Activated CD8-positive, alpha-beta memory T cell treated with anti-CD3 and anti-CD28 coated beads, Interleukin-2, amount 10 ng/mL, durations not matched to agents 7 days and 5 days (primary cell): ENCODE measurements at regions of chr5 and their contacts with region 1.

Region 1: GRCh38 chr5:151051066-151051930 is 29.5 kb downstream of the TNIP1 start:
- DNase-seq: peak; percentile 85
- ATAC-seq: peak; percentile 89
- H3K4me3 Mint-ChIP-seq: no peak overlapping the region
- H3K27ac Mint-ChIP-seq: peak overlapping the region; percentile 9
- H3K4me1 Mint-ChIP-seq: peaks cover 14% of the 10 kb centered on the region
- H3K27me3 Mint-ChIP-seq: no peaks in the 10 kb centered on the region

Region 2: DNA sequence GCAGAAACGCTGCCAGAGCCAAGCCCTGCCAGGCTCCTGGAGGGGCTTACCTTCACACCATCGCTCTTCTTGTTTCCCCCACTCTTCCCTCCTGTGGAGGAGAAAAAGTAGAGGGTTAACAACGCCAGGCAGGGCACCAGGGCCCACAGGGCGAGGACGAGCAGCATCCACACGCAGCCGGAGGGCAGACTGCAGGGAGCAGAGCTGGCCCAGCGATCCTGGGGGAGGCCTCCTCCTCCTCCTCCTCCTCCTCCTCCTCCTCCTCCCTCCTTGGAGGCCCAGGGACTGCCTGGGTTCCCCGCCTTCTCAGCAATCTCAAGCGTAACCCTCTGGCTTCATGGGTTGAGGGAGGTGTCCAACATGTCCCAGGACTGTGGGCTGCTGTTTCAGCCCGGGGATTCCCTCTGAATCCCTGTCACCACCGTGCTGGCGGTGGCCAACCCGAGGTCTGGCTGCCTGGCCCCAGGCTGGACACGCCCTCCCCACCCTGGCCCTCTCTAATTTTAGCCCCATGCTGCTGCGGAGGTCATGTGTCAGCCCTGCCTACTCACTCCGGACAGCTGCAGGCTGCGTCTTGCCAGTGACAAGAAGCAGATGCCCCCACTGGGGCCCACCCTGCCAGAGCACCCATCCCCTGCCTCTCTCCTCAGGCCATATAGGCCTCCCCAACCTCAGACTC is 806.0 kb before region 1 on chr5:
- CTCF ChIA-PET with region 1: no interaction called
- DNase-seq: no peak
- ATAC-seq: no peak
- H3K4me3 Mint-ChIP-seq: no peak overlapping the region
- H3K27ac Mint-ChIP-seq: no peak overlapping the region
- H3K4me1 Mint-ChIP-seq: no peaks in the 10 kb centered on the region
- H3K27me3 Mint-ChIP-seq: peaks cover 4% of the 10 kb centered on the region

Region 3: GRCh38 chr5:151016700-151017099 is 34.6 kb before region 1 on chr5:
- CTCF ChIA-PET with region 1: no interaction called
- DNase-seq: no peak
- ATAC-seq: no peak
- H3K4me3 Mint-ChIP-seq: no peak overlapping the region
- H3K27ac Mint-ChIP-seq: no peak overlapping the region
- H3K4me1 Mint-ChIP-seq: peaks cover 8% of the 10 kb centered on the region
- H3K27me3 Mint-ChIP-seq: peaks cover 14% of the 10 kb centered on the region

Region 4: GRCh38 chr5:151040211-151040747 is 11.0 kb before region 1 on chr5:
- CTCF ChIA-PET with region 1: interaction called, 19 read pairs
- DNase-seq: no peak
- ATAC-seq: no peak
- H3K4me3 Mint-ChIP-seq: no peak overlapping the region
- H3K27ac Mint-ChIP-seq: no peak overlapping the region
- H3K4me1 Mint-ChIP-seq: peaks cover 5% of the 10 kb centered on the region
- H3K27me3 Mint-ChIP-seq: no peaks in the 10 kb centered on the region

Region 5: DNA sequence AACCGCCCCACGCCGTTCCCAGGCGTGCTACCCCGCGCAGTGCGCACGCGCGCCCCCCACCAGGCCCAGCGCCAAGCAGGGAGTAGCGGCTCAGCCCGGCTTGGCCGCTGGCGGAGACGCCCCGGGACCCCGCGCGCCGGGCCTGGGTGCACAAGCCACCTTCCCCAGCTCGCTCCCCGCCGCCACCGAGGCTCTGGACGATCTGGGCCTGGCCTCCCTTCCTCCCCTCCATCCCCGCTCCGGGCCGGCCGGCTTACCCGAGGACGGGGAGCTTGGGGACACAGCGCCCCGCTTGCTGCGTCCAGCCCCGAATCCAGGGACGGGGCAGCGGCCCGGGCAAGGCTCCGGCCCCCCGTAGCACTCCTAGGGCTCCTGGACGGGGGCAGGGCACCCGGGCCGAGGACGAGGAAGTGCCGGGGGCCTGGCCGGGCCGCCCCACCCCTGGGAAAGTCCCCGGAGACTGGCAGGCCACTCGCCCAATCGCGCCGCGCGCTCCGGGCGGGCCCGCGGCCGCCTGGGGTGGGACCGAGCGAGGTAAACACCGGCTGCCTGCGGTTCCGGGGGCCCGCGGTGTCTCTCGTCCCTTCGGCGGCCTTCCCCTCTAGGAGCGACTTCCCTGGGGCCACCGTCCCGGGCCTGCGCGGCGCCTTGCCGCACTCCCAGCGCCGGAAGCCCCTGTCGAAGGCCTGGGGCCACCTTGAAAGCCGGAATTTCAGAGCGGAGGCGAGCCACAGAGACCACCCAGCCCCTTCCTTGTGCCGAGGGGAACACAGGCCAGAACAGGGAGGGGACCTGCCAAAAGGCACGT is 29.5 kb after region 1 on chr5 and contains the start of gene TNIP1:
- CTCF ChIA-PET with region 1: interaction called, 16 read pairs
- DNase-seq: peak; percentile 94
- ATAC-seq: peak; percentile 89
- H3K4me3 Mint-ChIP-seq: peak within 1 kb of the TSS; percentile 78
- H3K27ac Mint-ChIP-seq: peak within 1 kb of the TSS; percentile 78
- H3K4me1 Mint-ChIP-seq: peaks cover 78% of the 10 kb centered on the region
- H3K27me3 Mint-ChIP-seq: no peaks in the 10 kb centered on the region
- total RNA-seq, gene TNIP1: 136 to 201 TPM

Region 6: GRCh38 chr5:151097786-151098498 is 46.6 kb after region 1 on chr5:
- CTCF ChIA-PET with region 1: interaction called, 13 read pairs
- DNase-seq: peak; percentile 82
- ATAC-seq: peak; percentile 74
- H3K4me3 Mint-ChIP-seq: peak overlapping the region; percentile 49
- H3K27ac Mint-ChIP-seq: peak overlapping the region; percentile 62
- H3K4me1 Mint-ChIP-seq: peaks cover 83% of the 10 kb centered on the region
- H3K27me3 Mint-ChIP-seq: no peaks in the 10 kb centered on the region

Region 7: GRCh38 chr5:151157426-151158286 is 106.4 kb after region 1 on chr5 and contains the start of gene ANXA6:
- CTCF ChIA-PET with region 1: interaction called, 15 read pairs
- DNase-seq: peak; percentile 81
- ATAC-seq: peak; percentile 79
- H3K4me3 Mint-ChIP-seq: peak within 1 kb of the TSS; percentile 94
- H3K27ac Mint-ChIP-seq: peak within 1 kb of the TSS; percentile 94
- H3K4me1 Mint-ChIP-seq: peaks cover 36% of the 10 kb centered on the region
- H3K27me3 Mint-ChIP-seq: no peaks in the 10 kb centered on the region
- total RNA-seq, gene ANXA6: 623 to 640 TPM